Activated naive CD4-positive, alpha-beta T cell treated with anti-CD3 and anti-CD28 coated beads for 36 hours (primary cell): ENCODE measurements at regions of chr2 and their contacts with region 1.

Region 1: DNA sequence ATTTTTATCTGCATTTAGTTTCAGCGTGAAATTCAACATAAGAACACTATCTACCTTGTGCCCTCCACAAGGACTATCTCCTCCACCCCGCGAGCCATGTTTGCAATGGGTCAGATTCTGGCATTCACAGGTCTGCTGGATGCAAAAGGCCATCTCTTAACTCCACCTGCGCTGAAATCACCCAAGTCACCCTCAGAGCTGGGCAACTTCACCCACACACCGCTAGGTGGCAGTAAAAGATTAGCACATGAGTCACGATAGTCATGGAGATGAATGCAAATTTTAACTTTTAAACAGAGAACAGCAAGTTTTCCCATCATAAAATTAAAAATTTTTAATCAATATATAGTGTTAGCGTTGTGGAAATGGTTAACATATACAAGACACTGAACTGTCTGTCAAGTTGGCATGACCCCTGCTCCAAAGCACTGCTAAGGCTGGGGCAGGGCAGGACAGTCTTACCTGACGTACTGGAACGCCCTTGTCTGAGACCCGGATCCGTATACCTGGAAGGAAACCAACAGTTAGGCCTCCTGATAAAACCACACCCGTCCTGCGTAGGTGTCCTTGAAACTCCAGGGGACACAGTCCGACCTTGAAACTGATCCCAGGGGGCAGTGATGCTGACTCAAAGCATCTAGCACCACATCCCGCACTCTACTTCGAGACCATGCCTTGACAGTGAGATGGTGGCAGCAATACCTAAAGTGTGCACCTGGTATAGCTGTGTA is 89.6 kb downstream of the UXS1 start:
- DNase-seq: peak; percentile 80
- H3K4me3 Mint-ChIP-seq: no peak overlapping the region
- H3K27ac Mint-ChIP-seq: no peak overlapping the region
- H3K4me1 Mint-ChIP-seq: peaks cover 18% of the 10 kb centered on the region
- H3K27me3 Mint-ChIP-seq: no peaks in the 10 kb centered on the region

Region 2: GRCh38 chr2:106143495-106144215 is 39.2 kb after region 1 on chr2:
- CTCF ChIA-PET with region 1: interaction called, 5 read pairs
- intact Hi-C with region 1: loop called (anchors 5 kb)
- DNase-seq: no peak
- H3K4me3 Mint-ChIP-seq: no peak overlapping the region
- H3K27ac Mint-ChIP-seq: peak overlapping the region; percentile 66
- H3K4me1 Mint-ChIP-seq: peaks cover 77% of the 10 kb centered on the region
- H3K27me3 Mint-ChIP-seq: no peaks in the 10 kb centered on the region

Region 3: GRCh38 chr2:106160786-106161261 is 56.3 kb after region 1 on chr2:
- CTCF ChIA-PET with region 1: interaction called, 3 read pairs
- intact Hi-C with region 1: loop called (anchors 1 kb)
- DNase-seq: peak; percentile 67
- H3K4me3 Mint-ChIP-seq: peak overlapping the region; percentile 79
- H3K27ac Mint-ChIP-seq: peak overlapping the region; percentile 95
- H3K4me1 Mint-ChIP-seq: peaks cover 87% of the 10 kb centered on the region
- H3K27me3 Mint-ChIP-seq: no peaks in the 10 kb centered on the region

Region 4: GRCh38 chr2:106205488-106205887 is 101.0 kb after region 1 on chr2:
- CTCF ChIA-PET with region 1: no interaction called
- intact Hi-C with region 1: no loop called
- DNase-seq: no peak
- H3K4me3 Mint-ChIP-seq: no peak overlapping the region
- H3K27ac Mint-ChIP-seq: no peak overlapping the region
- H3K4me1 Mint-ChIP-seq: peaks cover 3% of the 10 kb centered on the region
- H3K27me3 Mint-ChIP-seq: no peaks in the 10 kb centered on the region

Region 5: DNA sequence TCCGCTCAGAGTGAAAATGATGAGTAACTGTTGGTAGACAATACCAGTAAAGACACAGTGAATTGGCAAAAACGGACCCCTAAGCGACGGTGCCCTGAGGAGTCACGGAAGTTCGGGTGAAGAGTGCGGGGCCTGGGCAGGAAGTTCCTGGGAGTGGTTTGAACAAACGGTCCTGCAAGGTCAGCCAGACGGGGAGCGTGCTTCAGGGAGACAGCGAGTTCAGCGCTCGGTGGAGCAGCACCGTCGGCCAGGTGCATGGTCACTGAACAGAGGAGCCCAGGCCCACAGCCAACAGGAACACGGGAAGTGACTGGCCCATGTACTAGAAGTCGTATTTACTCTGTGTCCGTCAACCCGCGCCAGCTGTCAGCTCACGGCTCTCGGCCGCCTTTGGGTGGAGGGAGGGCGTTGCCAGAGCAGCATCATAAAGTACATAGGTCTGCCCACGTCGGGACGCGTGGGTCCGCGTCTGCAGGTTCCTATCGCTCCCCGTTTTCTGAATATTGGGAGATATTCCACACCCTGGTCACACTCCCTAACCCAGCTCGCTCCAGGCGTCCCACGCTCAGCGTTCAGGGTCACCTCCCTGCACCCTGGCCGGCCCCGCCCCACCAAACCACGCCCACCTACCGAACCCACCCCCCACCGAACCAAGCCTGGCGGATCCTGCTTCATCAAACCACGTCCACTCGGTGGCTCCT is 165.2 kb after region 1 on chr2:
- CTCF ChIA-PET with region 1: interaction called, 3 read pairs
- intact Hi-C with region 1: loop called (anchors 5 kb)
- DNase-seq: peak; percentile 58
- H3K4me3 Mint-ChIP-seq: peak overlapping the region; percentile 83
- H3K27ac Mint-ChIP-seq: no peak overlapping the region
- H3K4me1 Mint-ChIP-seq: peaks cover 6% of the 10 kb centered on the region
- H3K27me3 Mint-ChIP-seq: peaks cover 11% of the 10 kb centered on the region

Region 6: GRCh38 chr2:106542811-106543259 is 438.3 kb after region 1 on chr2:
- CTCF ChIA-PET with region 1: interaction called, 15 read pairs
- intact Hi-C with region 1: loop called (anchors 1 kb)
- DNase-seq: peak; percentile 81
- H3K4me3 Mint-ChIP-seq: peak overlapping the region; percentile 68
- H3K27ac Mint-ChIP-seq: no peak overlapping the region
- H3K4me1 Mint-ChIP-seq: peaks cover 4% of the 10 kb centered on the region
- H3K27me3 Mint-ChIP-seq: peaks cover 8% of the 10 kb centered on the region

Region 7: DNA sequence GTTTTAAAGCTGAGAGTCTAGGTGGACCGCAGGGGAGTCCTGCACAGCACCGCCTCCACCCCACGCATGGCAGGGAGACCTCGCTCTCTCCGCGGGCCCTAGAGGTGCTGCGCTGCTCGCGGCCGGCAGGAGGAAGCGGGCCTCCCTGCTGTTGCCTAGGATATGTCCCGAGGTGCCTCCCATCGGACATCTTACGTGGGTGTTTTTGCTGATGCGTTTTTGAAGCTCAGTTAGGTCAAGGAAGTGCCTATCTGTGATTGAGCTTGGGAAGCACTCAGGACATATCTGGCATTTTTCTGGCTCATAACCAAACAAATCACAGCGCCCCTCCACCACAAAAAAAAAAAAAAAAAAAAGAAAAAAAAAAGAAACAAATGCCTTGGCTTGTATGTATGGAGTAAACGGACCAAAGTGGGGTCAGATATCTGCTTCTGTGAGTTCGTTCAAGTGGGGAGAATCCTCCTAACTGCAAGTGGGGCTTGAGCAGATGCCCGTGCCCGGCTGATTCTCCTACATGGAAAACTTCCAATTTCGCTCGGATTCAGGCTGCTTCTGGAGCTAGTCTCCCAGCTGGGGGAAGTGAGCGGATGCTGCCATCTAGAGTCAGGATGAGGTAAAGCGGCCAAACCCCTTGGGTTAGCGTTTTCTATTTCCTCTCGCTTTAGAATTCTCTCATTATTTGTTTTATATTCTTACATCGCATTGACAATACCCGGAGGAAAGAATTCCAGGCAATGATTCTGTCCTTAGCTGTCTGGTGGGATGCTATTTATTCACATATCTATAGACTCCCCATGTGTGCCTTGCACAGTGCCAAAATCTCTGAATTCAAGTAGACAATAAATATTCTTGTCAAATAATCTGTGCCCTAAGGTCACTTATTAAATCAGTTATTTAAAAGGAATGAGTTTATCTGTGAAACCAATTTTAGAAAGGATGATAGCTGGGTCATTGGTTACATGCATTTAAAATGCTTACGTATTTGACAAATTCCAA is 477.9 kb after region 1 on chr2:
- CTCF ChIA-PET with region 1: interaction called, 10 read pairs
- intact Hi-C with region 1: loop called (anchors 2 kb)
- DNase-seq: peak; percentile 75
- H3K4me3 Mint-ChIP-seq: peak overlapping the region; percentile 80
- H3K27ac Mint-ChIP-seq: no peak overlapping the region
- H3K4me1 Mint-ChIP-seq: peaks cover 16% of the 10 kb centered on the region
- H3K27me3 Mint-ChIP-seq: peaks cover 35% of the 10 kb centered on the region